Psoas muscle (tissue), 8 donors: ENCODE measurements at regions of chr15 and their contacts with region 1.

Region 1: GRCh38 chr15:45714590-45715488 is 80.0 kb downstream of the SQOR start:
- DNase-seq: peak; percentile 52 to 56
- ATAC-seq: peak; percentile 64 to 80 (median 74)
- H3K4me3 ChIP-seq: no peak overlapping the region
- H3K27ac ChIP-seq: no peak overlapping the region
- H3K4me1 ChIP-seq: peaks cover 6% of the 10 kb centered on the region
- H3K27me3 ChIP-seq: peaks cover 0 to 14% (median 0%) of the 10 kb centered on the region in 3 donors
- CTCF ChIP-seq: peak; percentile 75

Region 2: DNA sequence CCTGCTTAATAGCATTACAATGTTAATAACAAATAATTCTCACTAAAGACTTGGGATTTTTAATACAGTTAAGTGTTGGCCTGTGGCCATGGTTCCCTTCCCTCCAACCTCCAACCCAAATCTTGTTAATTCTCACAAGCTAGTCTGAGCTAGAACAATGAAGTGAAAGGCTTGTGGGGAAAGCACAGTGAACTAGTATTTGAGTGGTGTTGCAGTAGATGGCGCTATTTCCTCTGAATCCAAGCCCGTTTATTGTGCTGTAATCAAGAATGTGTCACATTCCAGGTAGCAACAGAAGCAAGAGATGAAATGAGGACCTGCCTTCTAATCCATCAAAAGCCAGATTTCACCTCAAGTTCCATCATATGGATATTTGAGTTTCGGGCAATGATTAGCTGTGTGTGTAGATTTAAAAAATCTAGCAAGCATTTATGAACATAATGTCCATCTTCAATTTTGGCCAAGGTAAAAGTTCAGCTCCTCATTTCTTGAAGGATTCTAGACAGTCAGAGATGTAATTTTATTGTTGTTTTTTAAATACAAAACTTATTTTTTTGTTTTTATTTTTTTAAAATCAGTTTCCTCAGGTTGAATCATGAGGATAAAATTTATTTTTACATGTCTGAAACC is 80.7 kb after region 1 on chr15:
- intact Hi-C with region 1: loop called in 1 of 2 experiments (anchors 2 kb)
- DNase-seq: no peak
- ATAC-seq: peak in 1 of 4 donors; percentile 80
- H3K4me3 ChIP-seq: no peak overlapping the region
- H3K27ac ChIP-seq: no peak overlapping the region
- H3K4me1 ChIP-seq: no peaks in the 10 kb centered on the region
- H3K27me3 ChIP-seq: peaks cover 0 to 18% (median 0%) of the 10 kb centered on the region in 3 donors
- CTCF ChIP-seq: peak; percentile 44

Region 3: GRCh38 chr15:45829336-45830153 is 114.7 kb after region 1 on chr15:
- intact Hi-C with region 1: no loop called
- DNase-seq: no peak
- ATAC-seq: no peak
- H3K4me3 ChIP-seq: no peak overlapping the region
- H3K27ac ChIP-seq: no peak overlapping the region
- H3K4me1 ChIP-seq: no peaks in the 10 kb centered on the region
- H3K27me3 ChIP-seq: no peaks in the 10 kb centered on the region
- CTCF ChIP-seq: no peak

Region 4: GRCh38 chr15:46312133-46312740 is 597.4 kb after region 1 on chr15:
- intact Hi-C with region 1: loop called (anchors 10 kb)
- DNase-seq: peak in 1 of 2 donors; percentile 46
- ATAC-seq: peak in 3 of 4 donors; percentile 77 to 82 (median 80)
- H3K4me3 ChIP-seq: no peak overlapping the region
- H3K27ac ChIP-seq: no peak overlapping the region
- H3K4me1 ChIP-seq: no peaks in the 10 kb centered on the region
- H3K27me3 ChIP-seq: no peaks in the 10 kb centered on the region
- CTCF ChIP-seq: peak; percentile 67